ENCODE measurements at regions of chr2 and their contacts with region 1.

Region 1: DNA sequence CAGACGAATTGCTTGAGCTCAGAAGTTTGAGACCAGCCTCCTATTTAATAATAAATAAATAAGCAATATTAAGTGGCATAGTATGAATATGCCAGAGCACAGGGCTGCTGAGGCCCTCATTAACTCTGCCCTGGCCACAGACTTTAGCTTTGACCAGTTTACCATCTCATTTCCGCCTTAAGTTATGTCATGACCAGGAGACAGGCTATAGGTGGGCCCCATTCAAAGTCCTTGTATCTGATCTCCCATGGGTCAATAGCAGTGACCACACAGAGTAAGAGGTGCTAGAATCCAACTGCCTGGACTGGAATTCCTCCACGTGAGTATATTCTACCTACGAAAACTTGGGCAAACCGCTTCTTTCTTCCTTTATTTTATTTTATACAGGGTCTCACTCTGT is 13.4 kb upstream of the ASXL2 start:
- DNase-seq: no peak
- ATAC-seq: no peak
- H3K4me3 ChIP-seq: no peak overlapping the region
- H3K4me3 Mint-ChIP-seq: no peak overlapping the region
- H3K27ac ChIP-seq: no peak overlapping the region
- H3K27ac Mint-ChIP-seq: no peak overlapping the region
- H3K4me1 ChIP-seq: no peaks in the 10 kb centered on the region
- H3K4me1 Mint-ChIP-seq: no peaks in the 10 kb centered on the region
- H3K27me3 ChIP-seq: peaks cover 0 to 2% of the 10 kb centered on the region in 2 experiments
- H3K27me3 Mint-ChIP-seq: peaks cover 0 to 3% of the 10 kb centered on the region in 2 donors

Region 2: GRCh38 chr2:25389161-25389560 is 502.5 kb before region 1 on chr2:
- CTCF ChIA-PET with region 1: interaction called in 1 of 2 experiments, 11 read pairs
- POLR2A ChIA-PET with region 1: no interaction called
- DNase-seq: no peak
- ATAC-seq: no peak
- H3K4me3 ChIP-seq: no peak overlapping the region
- H3K4me3 Mint-ChIP-seq: no peak overlapping the region
- H3K27ac ChIP-seq: no peak overlapping the region
- H3K27ac Mint-ChIP-seq: no peak overlapping the region
- H3K4me1 ChIP-seq: no peaks in the 10 kb centered on the region
- H3K4me1 Mint-ChIP-seq: peaks cover 0 to 17% (median 3%) of the 10 kb centered on the region in 3 donors
- H3K27me3 ChIP-seq: no peaks in the 10 kb centered on the region
- H3K27me3 Mint-ChIP-seq: no peaks in the 10 kb centered on the region

Measured in T-cell (primary cell).